ENCODE measurements at regions of chr3 and their contacts with region 1.

Region 1: GRCh38 chr3:138915503-138916498 is 31.1 kb downstream of the FOXL2 start:
- DNase-seq: peak; percentile 88
- H3K4me3 Mint-ChIP-seq: peak overlapping the region; percentile 78
- H3K27ac Mint-ChIP-seq: no peak overlapping the region
- H3K4me1 Mint-ChIP-seq: peaks cover 5% of the 10 kb centered on the region
- H3K27me3 Mint-ChIP-seq: no peaks in the 10 kb centered on the region

Region 2: GRCh38 chr3:138479438-138479863 is 436.4 kb before region 1 on chr3:
- CTCF ChIA-PET with region 1: interaction called, 22 read pairs
- POLR2A ChIA-PET with region 1: no interaction called
- intact Hi-C with region 1: loop called (anchors 1 kb)
- DNase-seq: peak; percentile 54
- H3K4me3 Mint-ChIP-seq: no peak overlapping the region
- H3K27ac Mint-ChIP-seq: no peak overlapping the region
- H3K4me1 Mint-ChIP-seq: no peaks in the 10 kb centered on the region
- H3K27me3 Mint-ChIP-seq: peaks cover 5% of the 10 kb centered on the region

Region 3: DNA sequence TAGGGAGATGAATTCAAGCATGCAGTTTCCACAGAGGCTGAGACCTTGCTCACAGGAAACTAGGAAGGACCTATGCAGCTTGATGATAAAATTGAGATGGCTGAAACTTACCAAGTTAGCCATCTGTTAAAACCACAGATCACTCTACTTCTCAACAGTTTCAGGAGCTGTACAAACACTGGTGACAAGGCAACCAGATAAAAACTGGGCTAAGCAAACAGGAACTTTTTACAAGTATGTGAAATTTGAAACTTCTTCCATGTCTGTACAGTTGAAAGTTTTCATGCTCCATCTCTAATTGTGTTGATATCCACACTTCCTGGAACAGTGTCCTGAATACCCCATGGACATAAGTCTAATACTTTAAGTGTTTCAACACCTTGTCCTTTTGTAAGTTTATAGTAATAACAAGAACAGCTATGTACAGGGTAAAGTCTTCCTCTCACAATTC is 229.0 kb before region 1 on chr3:
- CTCF ChIA-PET with region 1: interaction called, 245 read pairs
- POLR2A ChIA-PET with region 1: no interaction called
- intact Hi-C with region 1: no loop called
- DNase-seq: no peak
- H3K4me3 Mint-ChIP-seq: no peak overlapping the region
- H3K27ac Mint-ChIP-seq: peak overlapping the region; percentile 73
- H3K4me1 Mint-ChIP-seq: peaks cover 13% of the 10 kb centered on the region
- H3K27me3 Mint-ChIP-seq: no peaks in the 10 kb centered on the region

Region 4: GRCh38 chr3:138761002-138761401 is 154.8 kb before region 1 on chr3:
- CTCF ChIA-PET with region 1: interaction called, 12 read pairs
- POLR2A ChIA-PET with region 1: no interaction called
- intact Hi-C with region 1: loop called (anchors 5 kb)
- DNase-seq: no peak
- H3K4me3 Mint-ChIP-seq: no peak overlapping the region
- H3K27ac Mint-ChIP-seq: peak overlapping the region; percentile 88
- H3K4me1 Mint-ChIP-seq: peaks cover 35% of the 10 kb centered on the region
- H3K27me3 Mint-ChIP-seq: no peaks in the 10 kb centered on the region

Region 5: GRCh38 chr3:138842483-138843188 is 73.2 kb before region 1 on chr3:
- CTCF ChIA-PET with region 1: interaction called, 10 read pairs
- POLR2A ChIA-PET with region 1: no interaction called
- intact Hi-C with region 1: no loop called
- DNase-seq: no peak
- H3K4me3 Mint-ChIP-seq: no peak overlapping the region
- H3K27ac Mint-ChIP-seq: no peak overlapping the region
- H3K4me1 Mint-ChIP-seq: no peaks in the 10 kb centered on the region
- H3K27me3 Mint-ChIP-seq: no peaks in the 10 kb centered on the region

Region 6: DNA sequence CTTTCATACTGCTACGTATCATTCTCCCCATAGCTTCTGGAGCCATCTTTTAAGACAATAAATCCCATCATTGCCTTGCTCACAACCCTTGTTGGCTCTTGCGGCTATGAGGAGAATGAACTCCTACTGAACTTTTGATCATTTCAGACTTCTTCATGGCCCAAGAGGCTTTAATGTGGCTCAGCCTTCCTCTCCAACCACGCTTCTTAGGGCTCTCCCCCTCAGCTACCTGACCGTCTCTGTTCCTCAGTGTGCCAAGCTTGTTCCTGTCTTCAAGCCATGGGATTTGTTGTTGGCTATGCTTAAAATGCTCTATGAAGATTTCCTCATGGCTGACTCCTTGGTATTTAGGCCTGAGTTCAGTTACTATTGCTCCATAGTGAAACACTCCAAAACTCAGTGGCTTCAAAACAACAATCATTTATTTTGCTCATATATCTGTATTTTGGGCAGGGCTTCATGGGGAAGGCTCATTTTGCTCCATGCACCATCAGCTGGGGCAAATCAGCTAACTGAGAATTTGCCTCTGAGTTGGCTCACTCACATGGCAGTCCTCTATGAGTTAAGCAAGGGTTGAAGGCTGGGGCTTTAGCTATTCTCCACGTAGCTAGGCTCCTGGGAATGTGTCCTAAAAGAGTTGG is 16.3 kb before region 1 on chr3:
- CTCF ChIA-PET with region 1: interaction called, 19 read pairs
- POLR2A ChIA-PET with region 1: no interaction called
- intact Hi-C with region 1: no loop called
- DNase-seq: no peak
- H3K4me3 Mint-ChIP-seq: no peak overlapping the region
- H3K27ac Mint-ChIP-seq: no peak overlapping the region
- H3K4me1 Mint-ChIP-seq: no peaks in the 10 kb centered on the region
- H3K27me3 Mint-ChIP-seq: no peaks in the 10 kb centered on the region

Region 7: DNA sequence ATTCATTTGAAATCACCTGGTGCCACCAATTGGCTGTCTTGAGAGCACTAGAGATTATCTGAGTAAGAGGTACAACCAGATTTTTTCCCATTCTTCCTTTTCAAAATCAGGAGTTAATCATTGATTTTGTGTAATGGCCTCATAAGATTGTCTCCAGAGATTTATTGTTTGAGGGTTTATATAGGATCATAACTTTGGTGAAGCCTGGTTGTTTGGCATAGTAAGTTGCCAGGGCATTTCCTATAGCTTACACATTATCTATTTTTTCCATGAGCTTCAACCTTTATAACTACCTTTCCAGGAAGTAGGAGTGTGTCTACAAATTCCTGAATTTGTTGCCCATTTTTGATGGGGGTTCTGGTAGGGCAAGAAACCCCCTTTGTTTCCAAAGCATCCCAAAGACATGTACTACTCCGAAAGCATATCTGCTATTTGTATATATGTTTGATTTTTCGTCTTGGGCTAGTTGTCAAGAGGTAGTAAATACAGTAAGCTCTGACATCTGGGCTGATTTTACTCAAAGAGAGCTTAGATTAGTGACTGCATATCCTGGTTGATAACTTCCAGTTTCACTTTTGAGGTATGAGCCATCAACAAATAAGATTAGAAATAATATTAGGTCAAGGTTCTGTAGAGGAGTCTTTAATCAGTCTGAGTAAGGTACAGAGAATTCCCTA is 116.7 kb after region 1 on chr3:
- CTCF ChIA-PET with region 1: no interaction called
- POLR2A ChIA-PET with region 1: no interaction called
- intact Hi-C with region 1: no loop called
- DNase-seq: no peak
- H3K4me3 Mint-ChIP-seq: no peak overlapping the region
- H3K27ac Mint-ChIP-seq: no peak overlapping the region
- H3K4me1 Mint-ChIP-seq: no peaks in the 10 kb centered on the region
- H3K27me3 Mint-ChIP-seq: peaks cover 9% of the 10 kb centered on the region

Measured in activated CD4-positive, alpha-beta memory T cell treated with anti-CD3 and anti-CD28 coated beads for 36 hours (primary cell).